ENCODE measurements at regions of chr18 and their contacts with region 1.

Region 1: DNA sequence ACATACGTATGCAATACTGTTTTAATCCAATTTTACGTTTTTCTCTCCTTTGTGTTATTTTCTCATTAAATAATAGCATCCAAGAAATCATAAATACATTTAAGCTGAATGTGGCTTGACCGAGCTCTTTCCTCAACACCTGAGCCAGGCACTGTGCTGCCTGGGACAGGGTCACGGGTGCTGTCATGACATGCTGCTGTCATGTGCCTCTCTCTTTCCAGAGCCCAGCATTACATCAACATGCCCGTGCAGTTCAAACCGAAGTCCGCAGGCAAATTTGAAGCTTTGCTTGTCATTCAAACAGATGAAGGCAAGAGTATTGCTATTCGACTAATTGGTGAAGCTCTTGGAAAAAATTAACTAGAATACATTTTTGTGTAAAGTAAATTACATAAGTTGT is 94.1 kb upstream of the LDLRAD4 start:
- DNase-seq: no peak

Region 2: DNA sequence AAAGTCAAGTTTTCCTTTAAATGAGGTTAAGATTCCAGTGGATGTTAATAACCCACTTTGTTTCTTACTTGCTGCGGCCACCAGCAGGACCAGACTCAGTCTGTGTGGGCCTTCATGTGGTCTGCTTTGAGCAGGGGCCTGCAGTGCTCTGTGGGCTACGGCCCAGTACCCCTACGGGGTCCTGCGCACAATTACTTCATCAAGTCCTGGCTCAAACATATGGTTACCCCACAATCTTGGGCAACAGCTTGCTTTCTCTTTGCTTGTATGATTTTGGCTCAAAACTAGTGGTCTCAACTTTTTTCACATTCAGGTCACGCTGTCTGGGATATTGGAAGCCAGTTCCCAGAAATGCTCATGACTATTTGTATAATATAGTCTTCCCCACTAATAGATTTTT is 304.6 kb before region 1 on chr18:
- CTCF ChIA-PET with region 1: interaction called, 15 read pairs
- POLR2A ChIA-PET with region 1: no interaction called
- DNase-seq: no peak

Measured in HEK293T (cell line).